Endothelial cell of umbilical vein (primary cell): ENCODE measurements at regions of chr7 and their contacts with region 1.

Region 1: GRCh38 chr7:140696680-140697446 is at the start of gene NDUFB2:
- DNase-seq: peak; percentile 92
- H3K4me3 ChIP-seq: peak within 1 kb of the TSS; percentile 45 to 79 (median 66)
- H3K27ac ChIP-seq: peak within 1 kb of the TSS; percentile 43
- H3K4me1 ChIP-seq: peaks cover 12% of the 10 kb centered on the region
- H3K27me3 ChIP-seq: no peaks in the 10 kb centered on the region
- CTCF ChIP-seq: no peak
- POLR2A ChIP-seq: peak; percentile 73
- total RNA-seq, gene NDUFB2: 197 and 221 TPM in 2 replicates

Region 2: DNA sequence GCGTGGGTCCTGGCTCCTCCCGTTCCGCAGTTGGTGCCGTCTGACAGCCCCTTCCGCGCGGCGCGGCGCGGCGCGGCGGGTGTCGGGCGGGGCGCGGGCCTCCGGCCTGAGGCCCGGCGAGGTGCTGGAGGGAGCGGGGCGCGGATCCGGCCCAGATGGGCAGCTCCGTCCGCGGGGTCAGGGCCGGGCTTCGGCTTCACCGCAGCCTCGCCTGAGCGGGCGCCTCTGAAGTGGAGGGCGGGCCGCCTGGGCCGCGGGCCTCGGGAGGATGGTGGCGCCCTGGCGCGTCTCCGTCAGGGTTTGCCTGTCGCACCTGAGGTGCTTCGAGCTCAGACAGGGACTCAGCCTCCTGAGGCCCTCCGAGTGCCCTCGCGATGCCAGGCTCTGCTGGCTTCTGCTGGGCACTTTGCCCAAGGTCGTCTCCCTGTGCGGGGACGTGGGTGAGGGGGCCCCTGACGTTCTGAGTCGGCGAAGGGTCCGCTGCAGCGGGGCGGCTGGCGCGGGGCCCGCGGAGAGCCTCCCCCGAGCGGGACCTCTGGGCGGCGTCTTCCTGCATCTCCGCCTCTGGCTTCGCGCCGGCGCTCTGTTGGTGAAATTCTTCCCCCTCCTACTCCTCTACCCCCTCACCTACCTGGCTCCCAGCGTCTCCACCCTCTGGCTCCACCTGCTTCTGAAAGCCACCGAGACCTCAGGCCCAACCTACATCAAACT is 23.6 kb before region 1 on chr7:
- CTCF ChIA-PET with region 1: interaction called, 4 read pairs
- POLR2A ChIA-PET with region 1: no interaction called
- dilution Hi-C with region 1: no loop called
- intact Hi-C with region 1: loop called (anchors 1 kb)
- DNase-seq: peak; percentile 28
- H3K4me3 ChIP-seq: peak overlapping the region; percentile 22 to 76 (median 45)
- H3K27ac ChIP-seq: no peak overlapping the region
- H3K4me1 ChIP-seq: peaks cover 8% of the 10 kb centered on the region
- H3K27me3 ChIP-seq: peaks cover 0 to 3% of the 10 kb centered on the region in 2 experiments
- CTCF ChIP-seq: no peak
- POLR2A ChIP-seq: no peak

Region 3: GRCh38 chr7:141208539-141208938 is 511.7 kb after region 1 on chr7:
- CTCF ChIA-PET with region 1: no interaction called
- POLR2A ChIA-PET with region 1: no interaction called
- dilution Hi-C with region 1: no loop called
- intact Hi-C with region 1: no loop called
- DNase-seq: no peak
- H3K4me3 ChIP-seq: no peak overlapping the region
- H3K27ac ChIP-seq: no peak overlapping the region
- H3K4me1 ChIP-seq: no peaks in the 10 kb centered on the region
- H3K27me3 ChIP-seq: no peaks in the 10 kb centered on the region
- CTCF ChIP-seq: no peak
- POLR2A ChIP-seq: no peak